ENCODE measurements at regions of chr1 and their contacts with region 1.

Region 1: DNA sequence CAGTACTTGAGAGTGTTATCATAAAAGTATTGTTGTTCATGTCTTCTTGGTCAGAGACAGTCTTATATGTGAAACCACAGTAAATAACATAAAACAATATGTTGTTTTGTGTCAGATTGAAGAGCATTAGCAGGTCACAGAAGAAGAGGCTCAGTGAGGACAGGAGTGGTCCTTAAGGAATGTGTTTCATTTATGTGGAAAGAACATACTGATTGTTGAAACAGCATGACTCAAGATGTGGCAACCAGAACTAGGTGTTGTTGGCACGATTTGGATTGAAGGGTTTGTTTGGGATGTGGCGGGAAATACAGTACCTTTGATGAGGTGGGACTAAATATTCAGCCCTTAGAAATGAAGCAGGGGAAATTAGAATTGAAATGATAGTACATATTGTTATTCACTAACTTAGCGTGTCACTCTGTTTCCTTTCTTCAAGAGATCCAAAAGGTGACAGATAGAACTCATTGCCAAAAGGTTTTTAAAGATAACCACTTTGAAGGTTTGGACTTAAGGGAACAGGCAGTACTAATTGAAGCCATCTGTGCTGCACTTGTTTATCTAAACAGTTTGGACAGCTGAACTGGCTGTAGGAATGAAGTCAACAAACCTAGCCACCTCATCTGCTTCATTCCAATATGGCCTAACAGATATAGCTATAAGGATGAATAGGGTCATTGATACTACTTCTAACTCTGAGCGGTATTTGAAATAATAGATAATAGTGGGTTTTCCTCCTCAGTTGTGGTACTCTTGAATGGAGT is 14.4 kb downstream of the RALGPS2 start:
- H3K4me3 Mint-ChIP-seq: no peak overlapping the region
- H3K27ac Mint-ChIP-seq: no peak overlapping the region
- H3K4me1 Mint-ChIP-seq: peaks cover 22% of the 10 kb centered on the region
- H3K27me3 Mint-ChIP-seq: no peaks in the 10 kb centered on the region

Region 2: DNA sequence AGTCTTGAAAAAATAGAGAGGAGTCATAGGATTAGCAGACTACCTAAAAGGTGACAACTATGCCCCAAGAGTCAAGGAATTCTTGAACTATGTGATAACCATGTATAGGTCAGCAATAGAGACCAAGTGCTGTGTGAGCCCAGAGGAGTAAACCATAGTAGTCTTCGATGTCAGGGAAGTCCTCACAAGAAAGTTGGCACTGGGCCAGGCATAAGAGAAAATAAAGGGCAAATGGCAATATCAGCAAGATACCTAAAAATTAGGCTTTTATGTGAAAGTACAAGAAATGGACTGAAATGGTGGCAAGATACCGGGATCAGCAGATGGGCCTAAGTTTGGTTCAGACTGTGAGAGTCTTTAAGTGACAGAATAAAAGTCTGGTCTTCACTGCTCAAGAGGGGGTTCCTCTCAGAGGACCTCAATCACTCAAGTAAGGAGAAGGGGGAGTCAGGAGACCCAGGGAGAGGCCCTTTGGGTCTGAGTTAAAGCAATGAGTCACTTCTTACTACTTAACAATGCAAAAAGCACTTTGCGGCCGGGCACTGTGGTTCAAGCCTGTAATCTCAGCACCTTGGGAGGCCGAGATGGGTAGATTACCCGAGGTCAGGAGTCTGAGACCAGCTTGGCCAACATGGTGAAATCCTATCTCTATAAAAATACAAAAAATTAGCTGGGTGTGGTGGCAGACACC is 131.6 kb before region 1 on chr1:
- intact Hi-C with region 1: loop called (anchors 10 kb)
- H3K4me3 Mint-ChIP-seq: no peak overlapping the region
- H3K27ac Mint-ChIP-seq: no peak overlapping the region
- H3K4me1 Mint-ChIP-seq: peaks cover 16% of the 10 kb centered on the region
- H3K27me3 Mint-ChIP-seq: no peaks in the 10 kb centered on the region

Region 3: GRCh38 chr1:178806665-178807300 is 67.3 kb after region 1 on chr1:
- intact Hi-C with region 1: no loop called
- H3K4me3 Mint-ChIP-seq: no peak overlapping the region
- H3K27ac Mint-ChIP-seq: no peak overlapping the region
- H3K4me1 Mint-ChIP-seq: no peaks in the 10 kb centered on the region
- H3K27me3 Mint-ChIP-seq: no peaks in the 10 kb centered on the region